Mammary epithelial cell (primary cell): ENCODE measurements at regions of chr22 and their contacts with region 1.

Region 1: DNA sequence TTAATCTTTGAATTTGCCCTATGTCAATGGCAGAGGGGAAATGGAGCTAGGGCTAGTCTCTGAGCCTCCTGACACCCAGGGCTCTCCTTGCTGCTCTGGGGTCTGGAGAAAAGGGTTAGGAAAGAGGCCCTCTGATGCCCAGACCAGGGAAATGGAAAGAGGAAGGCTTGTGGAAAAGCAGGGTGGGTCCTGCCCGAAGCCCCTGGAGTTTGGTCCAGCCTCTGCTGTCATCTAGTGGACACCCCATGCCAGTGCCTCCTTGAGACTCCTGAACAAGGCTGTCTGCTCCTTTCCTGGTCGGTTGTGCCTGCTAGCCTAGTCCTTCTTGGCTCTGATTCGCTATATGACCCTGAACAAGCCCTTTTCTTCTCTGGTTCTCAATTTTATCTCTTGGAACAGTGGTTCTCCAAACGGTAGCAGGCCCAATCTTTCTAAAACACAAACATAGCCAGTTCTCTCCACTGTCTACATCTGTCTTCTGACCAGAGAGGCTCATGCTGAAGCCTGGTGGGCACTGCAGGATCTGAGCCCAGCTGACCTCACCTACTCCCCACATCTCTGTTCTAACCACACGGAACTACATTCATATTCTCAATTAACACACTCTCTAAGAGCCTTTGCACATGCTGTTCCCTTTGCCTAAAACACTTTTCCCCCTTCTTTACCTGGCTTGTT is 8.8 kb upstream of the PLA2G3 start:
- DNase-seq: peak; percentile 48
- H3K4me3 ChIP-seq: no peak overlapping the region
- H3K27ac ChIP-seq: no peak overlapping the region
- H3K4me1 ChIP-seq: no peaks in the 10 kb centered on the region
- H3K27me3 ChIP-seq: no peaks in the 10 kb centered on the region
- CTCF ChIP-seq: peak; percentile 98 to 99

Region 2: DNA sequence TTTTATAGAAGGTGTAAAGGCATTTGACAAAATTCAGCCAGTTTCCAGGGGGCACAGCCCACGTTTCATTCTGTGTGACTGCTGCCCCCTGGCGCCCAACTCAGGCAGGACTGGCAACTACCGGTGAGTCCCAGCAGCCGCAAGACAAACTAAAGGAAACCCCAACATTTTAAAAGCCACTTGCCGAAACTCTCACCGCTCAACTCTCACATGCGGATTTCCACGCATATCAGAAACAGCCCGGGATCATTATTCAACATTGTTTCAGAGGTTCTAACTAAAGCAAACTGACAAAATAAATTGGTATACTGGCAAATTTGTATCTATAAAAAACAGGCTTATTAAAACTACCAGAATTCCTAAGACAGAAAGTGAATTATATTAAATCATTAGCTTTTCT is 228.7 kb before region 1 on chr22:
- CTCF ChIA-PET with region 1: no interaction called
- dilution Hi-C with region 1: no loop called
- in situ Hi-C with region 1: no loop called
- intact Hi-C with region 1: loop called (anchors 1 kb)
- DNase-seq: peak; percentile 52
- H3K4me3 ChIP-seq: no peak overlapping the region
- H3K27ac ChIP-seq: no peak overlapping the region
- H3K4me1 ChIP-seq: peaks cover 9% of the 10 kb centered on the region
- H3K27me3 ChIP-seq: no peaks in the 10 kb centered on the region
- CTCF ChIP-seq: peak; percentile 75 to 89

Region 3: DNA sequence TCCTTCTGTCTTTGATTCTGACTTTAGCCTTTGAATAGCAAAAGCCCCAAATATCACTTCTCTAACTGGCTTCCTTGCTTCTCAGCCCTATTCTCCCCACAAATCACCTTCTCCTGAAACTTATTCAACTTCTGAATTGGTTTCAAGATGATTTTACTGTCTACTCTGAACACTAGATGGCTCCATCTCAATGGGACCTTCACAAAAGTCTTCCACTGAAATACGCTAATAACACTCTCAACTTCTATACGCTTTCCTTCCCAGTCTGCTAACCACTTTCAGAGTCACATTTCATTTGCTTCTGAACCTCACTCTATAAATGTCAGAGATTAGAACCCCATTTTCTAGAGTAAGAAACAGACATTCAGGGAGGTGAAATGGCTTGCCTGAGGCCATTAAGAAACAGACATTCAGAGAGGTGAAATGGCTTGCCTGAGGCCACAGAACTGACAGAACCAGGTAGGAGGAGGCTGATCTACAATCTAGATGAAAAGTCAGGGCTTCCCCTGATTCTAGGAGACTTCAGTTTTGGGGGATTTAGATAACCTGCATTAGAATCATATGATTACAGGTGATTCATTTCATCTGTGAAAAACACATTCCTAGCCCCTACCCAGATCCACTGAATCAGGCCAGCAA is 201.2 kb before region 1 on chr22:
- CTCF ChIA-PET with region 1: interaction called, 11 read pairs
- dilution Hi-C with region 1: no loop called
- in situ Hi-C with region 1: loop called in 1 of 2 experiments (anchors 10 kb)
- intact Hi-C with region 1: loop called (anchors 1 kb)
- DNase-seq: peak; percentile 64
- H3K4me3 ChIP-seq: no peak overlapping the region
- H3K27ac ChIP-seq: peak overlapping the region; percentile 78
- H3K4me1 ChIP-seq: peaks cover 40% of the 10 kb centered on the region
- H3K27me3 ChIP-seq: no peaks in the 10 kb centered on the region
- CTCF ChIP-seq: peak; percentile 60 to 70

Region 4: GRCh38 chr22:31089160-31090100 is 59.7 kb before region 1 on chr22:
- CTCF ChIA-PET with region 1: no interaction called
- dilution Hi-C with region 1: no loop called
- in situ Hi-C with region 1: no loop called
- intact Hi-C with region 1: loop called (anchors 1 kb)
- DNase-seq: no peak
- H3K4me3 ChIP-seq: no peak overlapping the region
- H3K27ac ChIP-seq: no peak overlapping the region
- H3K4me1 ChIP-seq: peaks cover 26% of the 10 kb centered on the region
- H3K27me3 ChIP-seq: no peaks in the 10 kb centered on the region
- CTCF ChIP-seq: peak; percentile 51 to 66

Region 5: GRCh38 chr22:31192513-31192912 is 43.4 kb after region 1 on chr22:
- CTCF ChIA-PET with region 1: no interaction called
- dilution Hi-C with region 1: no loop called
- in situ Hi-C with region 1: no loop called
- intact Hi-C with region 1: no loop called
- DNase-seq: peak; percentile 8
- H3K4me3 ChIP-seq: no peak overlapping the region
- H3K27ac ChIP-seq: no peak overlapping the region
- H3K4me1 ChIP-seq: no peaks in the 10 kb centered on the region
- H3K27me3 ChIP-seq: no peaks in the 10 kb centered on the region
- CTCF ChIP-seq: no peak

Region 6: GRCh38 chr22:31230871-31231621 is 82.0 kb after region 1 on chr22:
- CTCF ChIA-PET with region 1: no interaction called
- dilution Hi-C with region 1: no loop called
- in situ Hi-C with region 1: no loop called
- intact Hi-C with region 1: loop called (anchors 1 kb)
- DNase-seq: peak; percentile 16
- H3K4me3 ChIP-seq: no peak overlapping the region
- H3K27ac ChIP-seq: no peak overlapping the region
- H3K4me1 ChIP-seq: peaks cover 3% of the 10 kb centered on the region
- H3K27me3 ChIP-seq: no peaks in the 10 kb centered on the region
- CTCF ChIP-seq: peak; percentile 43 to 77

Region 7: GRCh38 chr22:31308181-31308580 is 159.1 kb after region 1 on chr22:
- CTCF ChIA-PET with region 1: no interaction called
- dilution Hi-C with region 1: no loop called
- in situ Hi-C with region 1: no loop called
- intact Hi-C with region 1: no loop called
- DNase-seq: no peak
- H3K4me3 ChIP-seq: no peak overlapping the region
- H3K27ac ChIP-seq: no peak overlapping the region
- H3K4me1 ChIP-seq: peaks cover 10% of the 10 kb centered on the region
- H3K27me3 ChIP-seq: no peaks in the 10 kb centered on the region
- CTCF ChIP-seq: no peak